ENCODE measurements at regions of chr15 and their contacts with region 1.

Region 1: DNA sequence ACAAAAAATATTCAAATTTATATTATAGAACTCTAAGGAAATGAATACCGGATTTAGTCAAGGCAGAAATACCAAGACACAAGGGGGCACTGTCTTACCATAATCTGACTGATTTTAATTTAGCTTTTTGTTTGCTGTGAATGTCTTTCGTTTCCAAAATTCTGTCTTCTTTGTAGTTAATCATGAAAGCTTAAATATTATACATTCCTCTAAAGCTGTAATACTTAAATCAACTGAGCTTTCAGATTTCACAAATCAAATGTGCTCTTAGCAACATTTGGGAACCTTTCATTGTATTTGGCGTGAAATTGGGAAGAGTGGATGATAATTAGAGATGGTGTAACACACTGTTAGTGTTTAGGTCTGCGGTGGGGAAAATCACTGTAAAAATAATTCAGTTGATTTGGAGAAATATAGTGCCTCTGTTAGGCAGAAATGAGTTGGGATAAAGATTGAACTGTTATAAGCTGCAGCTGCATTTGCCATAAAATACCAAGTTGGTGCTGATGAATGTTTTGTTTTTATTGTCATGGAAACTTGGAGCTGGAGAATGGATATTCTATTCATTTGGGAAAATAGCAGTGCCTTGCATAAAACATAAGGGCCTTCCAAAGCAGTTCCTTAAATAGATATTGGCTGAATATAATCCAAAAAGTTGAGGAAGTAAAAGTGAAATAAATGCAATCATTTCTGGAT is 228.2 kb downstream of the TCF12 start:
- DNase-seq: no peak
- ATAC-seq: peak; percentile 64; the same call in 2 of the 3 replicates
- H3K4me3 ChIP-seq: no peak overlapping the region
- H3K27ac ChIP-seq: no peak overlapping the region; the same call in 1 of the 2 replicates
- H3K4me1 ChIP-seq: peaks cover 15% of the 10 kb centered on the region
- H3K27me3 ChIP-seq: no peaks in the 10 kb centered on the region
- CTCF ChIP-seq: peak; percentile 42 to 70 (median 59); a peak in 5 of 6 replicates
- EP300 ChIP-seq: no peak
- POLR2A ChIP-seq: no peak
- RAD21 ChIP-seq: peak; percentile 77

Region 2: DNA sequence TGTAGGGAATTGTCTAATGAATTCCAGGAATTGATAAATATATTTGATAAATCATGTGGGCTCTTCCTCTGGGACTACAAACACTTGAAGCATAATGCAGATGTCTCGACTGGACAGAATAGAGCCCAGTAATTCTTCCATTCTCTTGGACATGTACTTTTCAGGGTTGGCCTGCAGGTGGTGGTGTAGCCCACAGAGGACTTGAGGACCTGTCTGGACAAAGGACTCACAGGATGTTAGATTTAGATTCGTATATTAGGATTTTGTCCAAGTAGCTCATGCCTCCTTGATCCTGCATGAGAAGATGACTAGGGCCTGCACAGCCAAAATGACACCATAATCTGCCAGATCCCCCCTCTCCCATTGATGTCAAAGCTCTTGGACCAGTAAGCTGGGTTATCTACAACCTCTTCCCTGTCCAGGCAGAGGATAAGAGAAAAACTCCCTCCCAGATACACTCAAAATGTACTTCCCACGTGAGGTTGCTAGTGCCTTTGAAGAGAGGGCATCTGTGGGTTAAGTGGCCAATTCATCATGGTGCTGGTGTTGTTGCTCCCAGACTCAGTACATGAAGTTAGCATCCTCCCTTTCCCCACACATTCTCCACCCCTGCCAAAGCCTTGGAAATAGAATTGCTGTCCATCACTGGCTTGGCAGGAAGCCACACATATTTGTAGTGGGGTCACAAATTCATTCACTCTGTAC is 324.8 kb before region 1 on chr15:
- CTCF ChIA-PET with region 1: interaction called, 24 read pairs
- POLR2A ChIA-PET with region 1: no interaction called
- RAD21 ChIA-PET with region 1: interaction called, 8 read pairs
- SMC1A ChIA-PET with region 1: interaction called, 21 read pairs
- in situ Hi-C with region 1: no loop called
- intact Hi-C with region 1: loop called (anchors 5 kb)
- DNase-seq: no peak
- ATAC-seq: peak; percentile 98
- H3K4me3 ChIP-seq: no peak overlapping the region
- H3K27ac ChIP-seq: no peak overlapping the region
- H3K4me1 ChIP-seq: no peaks in the 10 kb centered on the region
- H3K27me3 ChIP-seq: no peaks in the 10 kb centered on the region; a peak in 1 of 4 replicates
- CTCF ChIP-seq: peak; percentile 65 to 67 (median 66)
- EP300 ChIP-seq: no peak
- POLR2A ChIP-seq: no peak
- RAD21 ChIP-seq: peak; percentile 88

Region 3: GRCh38 chr15:56957812-56958406 is 188.7 kb before region 1 on chr15:
- CTCF ChIA-PET with region 1: no interaction called
- POLR2A ChIA-PET with region 1: no interaction called
- RAD21 ChIA-PET with region 1: no interaction called
- SMC1A ChIA-PET with region 1: no interaction called
- in situ Hi-C with region 1: no loop called
- intact Hi-C with region 1: no loop called
- DNase-seq: no peak
- ATAC-seq: no peak
- H3K4me3 ChIP-seq: no peak overlapping the region
- H3K27ac ChIP-seq: no peak overlapping the region
- H3K4me1 ChIP-seq: peaks cover 16% of the 10 kb centered on the region
- H3K27me3 ChIP-seq: no peaks in the 10 kb centered on the region
- CTCF ChIP-seq: no peak
- EP300 ChIP-seq: no peak
- POLR2A ChIP-seq: no peak
- RAD21 ChIP-seq: no peak

Region 4: DNA sequence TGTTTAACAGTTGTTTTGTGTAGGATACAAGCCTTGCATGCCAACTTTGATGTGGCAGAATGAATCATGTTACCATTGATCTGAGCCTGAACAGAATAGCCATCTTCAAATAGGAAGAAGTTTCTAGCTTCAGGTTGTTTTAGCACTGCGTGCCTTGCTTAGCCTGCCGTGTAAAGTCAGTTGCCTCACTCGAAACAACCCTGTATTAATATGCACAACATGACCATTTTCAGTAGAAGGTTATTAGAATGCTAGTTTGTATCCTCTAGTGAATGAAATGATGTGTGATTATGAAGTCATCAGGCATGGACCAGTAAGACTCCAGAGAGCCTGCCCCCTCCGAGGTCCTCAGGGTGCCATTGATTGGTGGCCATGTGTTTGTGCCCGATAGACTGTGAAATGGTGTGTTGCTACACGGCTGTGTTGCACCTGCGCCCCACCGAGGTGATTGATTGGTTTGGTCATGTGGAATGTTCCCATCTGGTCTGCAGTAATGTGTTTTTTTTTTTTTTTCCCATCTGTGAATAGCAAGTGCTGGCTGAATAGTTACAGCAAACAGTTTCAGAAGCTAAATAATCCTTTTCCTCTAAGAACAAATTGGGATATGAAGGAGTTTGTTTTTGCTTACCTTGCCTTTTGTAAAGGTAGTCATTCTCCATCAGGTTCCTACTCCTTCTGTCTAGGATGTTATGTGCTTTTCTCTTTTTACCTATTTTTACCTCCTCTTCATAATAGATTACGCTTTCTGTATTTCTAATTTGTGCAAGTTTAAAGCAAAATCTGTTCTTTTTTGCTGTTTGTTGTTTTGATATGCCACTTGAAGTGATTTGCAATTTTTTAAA is 13.3 kb before region 1 on chr15:
- CTCF ChIA-PET with region 1: interaction called, 39 read pairs
- POLR2A ChIA-PET with region 1: no interaction called
- RAD21 ChIA-PET with region 1: interaction called, 8 read pairs
- SMC1A ChIA-PET with region 1: interaction called, 20 read pairs
- in situ Hi-C with region 1: no loop called
- intact Hi-C with region 1: no loop called
- DNase-seq: no peak
- ATAC-seq: peak; percentile 70
- H3K4me3 ChIP-seq: no peak overlapping the region
- H3K27ac ChIP-seq: no peak overlapping the region; the same call in 1 of the 2 replicates
- H3K4me1 ChIP-seq: peaks cover 15% of the 10 kb centered on the region
- H3K27me3 ChIP-seq: no peaks in the 10 kb centered on the region
- CTCF ChIP-seq: peak in 1 of 3 experiments; percentile 14; a peak in 1 of 6 replicates
- EP300 ChIP-seq: no peak
- POLR2A ChIP-seq: 0 out of 2 replicates have a peak, but pooled peaks have one; percentile 23
- RAD21 ChIP-seq: peak; percentile 48

Region 5: GRCh38 chr15:57213862-57214261 is 67.2 kb after region 1 on chr15:
- CTCF ChIA-PET with region 1: interaction called, 102 read pairs
- POLR2A ChIA-PET with region 1: no interaction called
- RAD21 ChIA-PET with region 1: interaction called, 36 read pairs
- SMC1A ChIA-PET with region 1: interaction called, 73 read pairs
- in situ Hi-C with region 1: no loop called
- intact Hi-C with region 1: loop called (anchors 2 kb)
- DNase-seq: no peak
- ATAC-seq: peak; percentile 86
- H3K4me3 ChIP-seq: no peak overlapping the region
- H3K27ac ChIP-seq: no peak overlapping the region
- H3K4me1 ChIP-seq: no peaks in the 10 kb centered on the region
- H3K27me3 ChIP-seq: no peaks in the 10 kb centered on the region
- CTCF ChIP-seq: peak; percentile 42 to 67 (median 48); a peak in 5 of 6 replicates
- EP300 ChIP-seq: no peak
- POLR2A ChIP-seq: no peak
- RAD21 ChIP-seq: peak; percentile 83

Region 6: DNA sequence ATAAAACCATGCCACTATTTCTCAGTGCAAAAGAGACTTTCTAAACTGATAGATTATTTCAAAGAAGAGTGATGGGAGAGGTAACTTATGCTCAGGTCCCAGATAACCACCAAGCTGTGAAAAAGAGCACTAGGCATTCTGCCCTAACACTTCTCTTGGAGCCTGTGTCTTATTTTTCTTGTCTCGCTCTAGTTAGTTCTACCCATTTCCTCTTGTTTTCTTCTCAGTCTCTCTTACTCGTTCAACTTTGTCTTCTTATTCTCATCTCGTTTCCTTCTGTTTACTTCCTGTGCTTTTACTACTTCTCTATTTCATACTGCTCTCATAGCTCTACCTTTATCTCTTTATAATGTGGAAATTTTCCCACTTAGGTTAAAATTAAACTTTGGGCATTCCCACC is 137.9 kb after region 1 on chr15:
- CTCF ChIA-PET with region 1: interaction called, 11 read pairs
- POLR2A ChIA-PET with region 1: no interaction called
- RAD21 ChIA-PET with region 1: interaction called, 9 read pairs
- SMC1A ChIA-PET with region 1: interaction called, 12 read pairs
- in situ Hi-C with region 1: no loop called
- intact Hi-C with region 1: no loop called
- DNase-seq: no peak
- ATAC-seq: peak; percentile 75
- H3K4me3 ChIP-seq: peak overlapping the region; percentile 24; the same call in 1 of the 2 replicates
- H3K27ac ChIP-seq: peak overlapping the region; percentile 54
- H3K4me1 ChIP-seq: peaks cover 56% of the 10 kb centered on the region
- H3K27me3 ChIP-seq: no peaks in the 10 kb centered on the region
- CTCF ChIP-seq: no peak
- EP300 ChIP-seq: no peak
- POLR2A ChIP-seq: no peak
- RAD21 ChIP-seq: no peak

Region 7: GRCh38 chr15:57527382-57528091 is 380.9 kb after region 1 on chr15:
- CTCF ChIA-PET with region 1: interaction called, 72 read pairs
- POLR2A ChIA-PET with region 1: no interaction called
- RAD21 ChIA-PET with region 1: interaction called, 47 read pairs
- SMC1A ChIA-PET with region 1: interaction called, 39 read pairs
- in situ Hi-C with region 1: loop called (anchors 5 kb)
- intact Hi-C with region 1: loop called (anchors 10 kb)
- DNase-seq: peak; percentile 46
- ATAC-seq: peak; percentile 93
- H3K4me3 ChIP-seq: no peak overlapping the region
- H3K27ac ChIP-seq: no peak overlapping the region
- H3K4me1 ChIP-seq: no peaks in the 10 kb centered on the region
- H3K27me3 ChIP-seq: no peaks in the 10 kb centered on the region; a peak in 1 of 4 replicates
- CTCF ChIP-seq: peak; percentile 34 to 74 (median 38); a peak in 5 of 6 replicates
- EP300 ChIP-seq: no peak
- POLR2A ChIP-seq: no peak
- RAD21 ChIP-seq: peak; percentile 75